Activated T-helper 2 cell treated with anti-CD3 and anti-CD28 coated beads, Interferon-gamma antibody, Interleukin-2, Interleukin-4, amounts not matched to agents 10 μg/mL and 5 μg/mL and 100 μg/mL, durations not matched to agents 14 hours and 24 hours and 36 hours (primary cell): ENCODE measurements at regions of chr5 and their contacts with region 1.

Region 1: DNA sequence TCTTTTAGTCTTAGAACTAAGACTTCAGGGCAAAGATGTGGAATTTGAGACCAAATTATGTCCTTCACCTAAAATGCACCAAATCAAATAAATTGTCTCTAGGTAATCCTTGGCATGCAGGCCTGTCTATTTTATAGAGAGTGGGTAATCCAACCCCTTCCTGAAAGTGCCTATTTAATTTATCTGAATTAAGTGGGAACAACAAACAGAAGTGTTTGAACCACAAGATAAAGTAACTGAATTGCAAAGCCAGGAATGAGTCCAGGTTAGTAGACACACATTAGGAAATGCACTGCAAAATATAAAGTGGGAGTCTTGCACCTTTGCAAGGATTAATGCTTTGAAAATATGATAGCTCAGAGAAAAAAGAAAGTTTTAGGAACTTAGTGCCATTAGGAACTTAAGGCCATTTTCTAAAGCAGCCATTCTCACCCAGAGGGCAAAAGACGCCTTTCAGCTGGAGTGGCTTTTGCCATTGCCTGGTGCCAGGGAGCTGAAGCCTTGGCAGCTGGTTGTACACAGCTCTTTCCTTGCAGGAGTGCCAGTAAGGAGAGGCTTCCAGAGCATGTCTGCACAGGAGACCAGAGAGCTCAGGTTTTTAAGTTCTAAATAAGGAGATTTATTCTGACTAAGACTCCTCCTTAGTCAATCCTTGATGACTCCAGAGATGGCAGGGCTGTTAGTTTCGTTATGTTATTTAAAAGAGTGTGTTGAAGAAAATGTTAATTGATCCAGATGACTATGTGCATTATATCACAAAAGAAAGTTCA is 151.7 kb upstream of the ELL2 start:
- DNase-seq: no peak
- H3K4me3 Mint-ChIP-seq: no peak overlapping the region
- H3K27ac Mint-ChIP-seq: peak overlapping the region; percentile 47
- H3K4me1 Mint-ChIP-seq: peaks cover 50% of the 10 kb centered on the region
- H3K27me3 Mint-ChIP-seq: no peaks in the 10 kb centered on the region

Region 2: GRCh38 chr5:95858661-95859326 is 254.6 kb before region 1 on chr5:
- intact Hi-C with region 1: loop called (anchors 1 kb)
- DNase-seq: peak; percentile 84
- H3K4me3 Mint-ChIP-seq: peak overlapping the region; percentile 38
- H3K27ac Mint-ChIP-seq: peak overlapping the region; percentile 80
- H3K4me1 Mint-ChIP-seq: peaks cover 52% of the 10 kb centered on the region
- H3K27me3 Mint-ChIP-seq: no peaks in the 10 kb centered on the region

Region 3: GRCh38 chr5:96067894-96068614 is 45.3 kb before region 1 on chr5:
- intact Hi-C with region 1: loop called (anchors 1 kb)
- DNase-seq: no peak
- H3K4me3 Mint-ChIP-seq: peak overlapping the region; percentile 19
- H3K27ac Mint-ChIP-seq: peak overlapping the region; percentile 91
- H3K4me1 Mint-ChIP-seq: peaks cover 74% of the 10 kb centered on the region
- H3K27me3 Mint-ChIP-seq: no peaks in the 10 kb centered on the region

Region 4: DNA sequence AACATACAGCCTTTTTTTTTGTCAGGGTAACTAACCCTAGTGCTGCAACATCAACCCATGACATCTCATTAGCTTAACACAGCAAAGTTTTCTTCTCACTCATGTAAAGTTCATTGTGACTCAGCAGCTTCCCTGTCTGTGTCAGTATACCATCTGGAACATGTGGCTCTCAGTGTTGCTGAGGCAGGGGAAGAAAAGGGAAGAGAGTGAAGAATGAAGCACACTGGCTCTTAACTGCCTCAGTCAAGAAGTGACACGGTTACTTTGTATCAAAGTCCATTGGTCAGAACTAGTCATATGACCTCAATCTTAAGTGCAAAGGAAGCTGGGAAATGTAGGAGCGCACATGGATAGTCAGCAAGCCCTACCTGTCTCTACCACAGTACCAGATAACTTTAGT is 33.3 kb after region 1 on chr5:
- intact Hi-C with region 1: loop called (anchors 5 kb)
- DNase-seq: no peak
- H3K4me3 Mint-ChIP-seq: no peak overlapping the region
- H3K27ac Mint-ChIP-seq: no peak overlapping the region
- H3K4me1 Mint-ChIP-seq: peaks cover 6% of the 10 kb centered on the region
- H3K27me3 Mint-ChIP-seq: no peaks in the 10 kb centered on the region

Region 5: GRCh38 chr5:96235008-96235910 is 121.9 kb after region 1 on chr5:
- intact Hi-C with region 1: no loop called
- DNase-seq: no peak
- H3K4me3 Mint-ChIP-seq: no peak overlapping the region
- H3K27ac Mint-ChIP-seq: no peak overlapping the region
- H3K4me1 Mint-ChIP-seq: no peaks in the 10 kb centered on the region
- H3K27me3 Mint-ChIP-seq: peaks cover 14% of the 10 kb centered on the region

Region 6: DNA sequence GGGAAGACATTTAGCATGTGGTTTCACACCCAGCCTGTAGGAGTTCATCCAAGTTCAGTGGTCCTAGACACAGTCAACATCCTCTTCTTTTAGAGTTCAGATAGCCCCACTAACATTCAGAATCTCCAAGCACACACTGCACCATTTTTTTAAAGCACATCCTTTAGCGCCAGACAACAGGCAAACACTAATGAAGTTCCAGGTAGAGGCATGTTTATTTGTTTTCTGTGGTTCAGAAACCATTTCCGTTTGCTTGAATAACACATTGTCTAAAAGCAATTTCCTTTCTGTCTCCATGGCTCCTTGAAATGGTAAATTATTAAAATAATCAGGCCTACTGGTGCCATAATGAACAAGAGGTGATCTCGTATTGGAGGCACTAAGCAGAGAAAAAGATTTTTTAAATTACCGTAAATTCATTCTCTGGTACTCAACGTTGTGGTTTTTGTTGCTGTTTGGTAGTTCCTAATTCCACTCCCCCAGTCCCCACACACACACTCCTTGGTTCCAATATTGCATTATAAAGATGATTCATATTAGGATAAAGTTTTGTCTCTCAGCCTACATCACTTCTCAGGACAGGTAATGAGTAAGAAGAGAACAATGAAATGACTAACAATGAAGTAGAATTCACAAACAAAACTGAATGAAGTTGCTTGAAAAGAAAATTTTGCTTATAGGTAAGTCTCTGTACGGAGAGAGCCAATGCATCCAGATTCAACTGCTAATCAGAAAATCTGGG is 166.6 kb after region 1 on chr5:
- intact Hi-C with region 1: loop called (anchors 2 kb)
- DNase-seq: no peak
- H3K4me3 Mint-ChIP-seq: no peak overlapping the region
- H3K27ac Mint-ChIP-seq: peak overlapping the region; percentile 47
- H3K4me1 Mint-ChIP-seq: peaks cover 25% of the 10 kb centered on the region
- H3K27me3 Mint-ChIP-seq: peaks cover 2% of the 10 kb centered on the region